Cardiac septum (tissue), 1 donor: ENCODE measurements at regions of chr18 and their contacts with region 1.

Region 1: GRCh38 chr18:45690975-45691815 is 32.8 kb upstream of the SLC14A1 start:
- DNase-seq: peak; percentile 82

Region 2: DNA sequence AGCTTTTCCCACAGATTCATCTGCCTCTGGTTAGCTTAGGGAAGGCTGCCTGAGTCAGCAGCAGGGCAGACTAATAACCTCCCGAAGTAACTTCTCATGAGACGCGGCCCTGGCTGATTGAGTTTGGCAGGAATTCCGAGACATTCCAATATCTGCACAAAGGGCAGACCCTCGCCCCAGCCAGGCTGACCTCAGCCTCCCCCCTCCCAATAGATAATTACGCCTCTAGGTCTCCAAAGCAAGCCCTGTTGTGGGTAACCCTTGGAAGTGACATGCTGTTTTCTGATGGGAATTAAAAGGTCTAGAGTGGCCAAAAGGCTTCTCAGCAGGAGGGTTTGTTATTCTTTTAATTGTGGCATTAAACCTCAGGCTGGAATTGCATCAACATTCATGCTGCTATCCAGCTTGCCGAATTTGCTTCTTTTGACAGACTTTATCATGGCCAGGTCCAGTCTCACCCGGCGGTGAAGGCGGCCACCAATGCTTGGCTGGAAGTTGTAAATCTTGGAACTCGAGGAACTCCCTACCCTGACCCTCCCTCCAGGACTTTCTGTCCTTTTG is 173.9 kb before region 1 on chr18:
- intact Hi-C with region 1: no loop called
- DNase-seq: no peak

Region 3: DNA sequence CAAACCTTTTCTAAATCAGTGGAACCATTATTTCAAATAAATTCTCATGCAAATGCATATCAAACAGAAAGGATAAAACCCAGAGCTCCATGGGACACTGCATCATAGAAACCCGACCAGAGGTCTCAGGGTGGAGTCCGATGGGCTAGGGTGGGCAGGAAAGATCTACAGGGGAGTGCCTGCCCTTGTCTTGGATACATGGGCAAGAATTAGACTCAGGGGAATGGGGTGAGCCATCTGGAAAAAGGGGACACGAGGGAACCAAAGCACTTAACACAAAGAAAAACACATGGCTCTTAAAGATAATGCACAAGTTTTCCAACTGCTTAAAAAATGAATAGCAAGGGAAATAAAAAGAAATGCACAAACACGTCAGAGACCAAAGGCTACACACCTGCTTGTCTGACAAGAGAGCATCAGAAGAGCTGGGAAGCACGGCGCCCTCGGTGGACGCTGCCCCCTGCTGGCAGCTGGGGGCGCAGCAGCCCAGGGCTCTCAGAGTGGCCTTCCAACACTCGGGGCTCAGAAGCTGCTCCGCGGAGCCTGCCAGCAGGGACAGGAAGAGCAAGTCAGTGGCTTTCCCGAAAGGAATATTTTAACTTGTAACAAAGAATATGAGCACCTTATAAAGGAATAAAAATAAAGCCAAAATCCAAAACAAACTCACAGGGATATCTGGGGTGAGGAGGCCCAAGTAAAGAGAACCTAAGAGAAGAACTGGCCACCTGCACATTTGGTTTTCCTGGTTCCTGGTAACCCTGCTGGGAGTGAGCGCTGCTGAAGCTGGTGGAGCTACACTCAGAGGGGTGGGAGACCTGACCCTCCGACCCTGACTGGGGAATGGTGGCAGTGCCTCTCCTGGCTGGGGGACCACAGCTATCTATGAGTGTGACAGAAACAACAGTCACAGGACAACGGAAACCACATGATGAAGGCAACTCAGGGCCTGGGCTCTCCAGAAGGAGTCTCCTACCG is 188.8 kb after region 1 on chr18:
- intact Hi-C with region 1: loop called (anchors 1 kb)
- DNase-seq: peak; percentile 89